ENCODE measurements at regions of chr1 and their contacts with region 1.

Region 1: GRCh38 chr1:85464497-85465098 is 361 bp downstream of the DDAH1 start:
- DNase-seq: peak; percentile 55 to 74
- ATAC-seq: peak; percentile 74 to 91 (median 87)
- H3K4me3 ChIP-seq: peak overlapping the region; percentile 31 to 90 (median 70)
- H3K27ac ChIP-seq: peak overlapping the region; percentile 26 to 89 (median 77)
- H3K4me1 ChIP-seq: peaks cover 0 to 20% (median 14%) of the 10 kb centered on the region in 9 donors
- H3K27me3 ChIP-seq: peaks cover 0 to 31% (median 0%) of the 10 kb centered on the region in 7 donors
- CTCF ChIP-seq: peak in 1 of 9 donors; percentile 0

Region 2: GRCh38 chr1:85313888-85314696 is 150.5 kb before region 1 on chr1:
- intact Hi-C with region 1: loop called in 2 of 10 experiments (anchors 10 kb)
- DNase-seq: peak in 1 of 2 donors; percentile 47
- ATAC-seq: peak; percentile 86 to 94 (median 92)
- H3K4me3 ChIP-seq: no peak overlapping the region
- H3K27ac ChIP-seq: peak overlapping the region; percentile 61 to 94 (median 80)
- H3K4me1 ChIP-seq: peaks cover 0 to 44% (median 29%) of the 10 kb centered on the region in 9 donors
- H3K27me3 ChIP-seq: no peaks in the 10 kb centered on the region
- CTCF ChIP-seq: no peak

Region 3: DNA sequence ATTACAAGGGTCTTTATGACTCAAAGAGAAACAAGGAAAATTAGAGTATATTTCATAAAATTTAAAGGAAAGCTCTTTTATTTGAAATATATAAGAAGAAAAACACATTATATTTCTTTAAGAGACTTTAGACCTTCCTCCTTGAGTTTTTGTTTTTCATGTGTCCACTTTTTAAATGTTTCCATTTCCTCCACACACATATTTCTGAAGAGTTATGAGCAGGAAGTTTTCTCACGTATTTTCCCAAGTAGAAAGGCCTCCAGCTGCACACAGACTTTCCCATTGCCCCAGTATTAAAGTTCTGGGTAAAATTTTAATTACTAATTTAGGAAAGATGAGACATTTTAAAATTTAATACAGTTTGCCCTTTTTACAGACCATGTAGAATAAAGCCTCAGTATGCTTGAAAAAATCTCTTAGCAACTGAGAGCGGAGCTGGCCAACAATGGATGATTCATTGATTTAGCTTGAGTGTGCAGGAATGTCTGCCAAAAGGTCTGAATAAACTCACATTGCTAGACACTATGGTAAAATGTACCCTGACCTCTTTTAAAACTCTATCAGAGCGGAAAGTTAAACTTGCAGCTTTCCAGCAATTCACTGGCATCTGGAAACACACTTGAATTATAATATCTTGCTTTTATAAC is 57.6 kb before region 1 on chr1:
- intact Hi-C with region 1: loop called in 2 of 10 experiments (anchors 5 to 10 kb)
- DNase-seq: peak in 1 of 2 donors; percentile 46
- ATAC-seq: peak; percentile 75 to 97 (median 85)
- H3K4me3 ChIP-seq: no peak overlapping the region
- H3K27ac ChIP-seq: peak overlapping the region in 7 of 10 donors; percentile 41 to 79 (median 56)
- H3K4me1 ChIP-seq: peaks cover 0 to 41% (median 13%) of the 10 kb centered on the region in 9 donors
- H3K27me3 ChIP-seq: no peaks in the 10 kb centered on the region
- CTCF ChIP-seq: no peak

Region 4: DNA sequence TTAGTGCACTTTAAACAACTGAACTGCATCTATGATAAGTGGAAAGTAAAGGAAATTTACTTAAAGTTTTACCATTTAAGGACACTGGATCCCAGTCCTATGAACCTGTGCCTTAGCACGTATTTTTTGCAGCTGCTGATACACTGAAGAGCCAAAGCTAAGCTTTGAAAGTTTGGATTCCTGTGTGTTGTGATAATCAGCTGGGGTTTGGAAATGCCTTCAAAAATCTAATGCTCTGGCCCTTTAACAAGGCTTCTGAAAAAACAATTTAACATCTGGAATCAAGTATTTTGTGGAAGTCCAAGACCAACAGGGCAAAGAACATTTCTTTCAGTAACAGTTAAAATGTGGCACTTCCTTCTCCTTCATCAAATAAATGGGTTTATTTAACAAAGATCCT is 51.4 kb before region 1 on chr1:
- intact Hi-C with region 1: loop called in 2 of 10 experiments (anchors 5 to 10 kb)
- DNase-seq: no peak
- ATAC-seq: peak in 1 of 8 donors; percentile 37
- H3K4me3 ChIP-seq: no peak overlapping the region
- H3K27ac ChIP-seq: peak overlapping the region in 2 of 10 donors; percentile 11 to 24
- H3K4me1 ChIP-seq: peaks cover 0 to 7% (median 0%) of the 10 kb centered on the region in 9 donors
- H3K27me3 ChIP-seq: no peaks in the 10 kb centered on the region
- CTCF ChIP-seq: no peak

Region 5: GRCh38 chr1:85502625-85503083 is 38.1 kb after region 1 on chr1:
- intact Hi-C with region 1: loop called in 1 of 10 experiments (anchors 5 kb)
- DNase-seq: peak in 1 of 2 donors; percentile 68
- ATAC-seq: peak; percentile 62 to 94 (median 88)
- H3K4me3 ChIP-seq: no peak overlapping the region
- H3K27ac ChIP-seq: no peak overlapping the region
- H3K4me1 ChIP-seq: peaks cover 0 to 14% (median 0%) of the 10 kb centered on the region in 9 donors
- H3K27me3 ChIP-seq: no peaks in the 10 kb centered on the region
- CTCF ChIP-seq: peak; percentile 22 to 72 (median 58)

Measured in heart right ventricle (tissue), 16 donors.